CD8-positive, alpha-beta memory T cell (primary cell): ENCODE measurements at regions of chr5 and their contacts with region 1.

Region 1: GRCh38 chr5:177311723-177312648 is at the start of gene MXD3:
- DNase-seq: peak; percentile 92 to 96 (median 94)
- H3K4me3 ChIP-seq: peak within 1 kb of the TSS; percentile 70
- H3K4me3 Mint-ChIP-seq: peak within 1 kb of the TSS; percentile 70 to 92 (median 78)
- H3K27ac ChIP-seq: peak within 1 kb of the TSS; percentile 51
- H3K27ac Mint-ChIP-seq: peak within 1 kb of the TSS; percentile 32 to 84 (median 57)
- H3K4me1 ChIP-seq: peaks cover 20% of the 10 kb centered on the region
- H3K4me1 Mint-ChIP-seq: peaks cover 29 to 43% (median 30%) of the 10 kb centered on the region in 3 donors
- H3K27me3 ChIP-seq: no peaks in the 10 kb centered on the region
- H3K27me3 Mint-ChIP-seq: peaks cover 0 to 2% of the 10 kb centered on the region in 2 donors
- total RNA-seq, gene MXD3: 10.2 to 13.4 TPM

Region 2: GRCh38 chr5:177071666-177072385 is 240.2 kb before region 1 on chr5:
- CTCF ChIA-PET with region 1: no interaction called
- POLR2A ChIA-PET with region 1: no interaction called
- DNase-seq: peak; percentile 31 to 60 (median 52)
- H3K4me3 ChIP-seq: no peak overlapping the region
- H3K4me3 Mint-ChIP-seq: peak overlapping the region in 1 of 7 donors; percentile 11
- H3K27ac ChIP-seq: no peak overlapping the region
- H3K27ac Mint-ChIP-seq: peak overlapping the region in 1 of 8 donors; percentile 62
- H3K4me1 ChIP-seq: no peaks in the 10 kb centered on the region
- H3K4me1 Mint-ChIP-seq: peaks cover 3 to 5% (median 5%) of the 10 kb centered on the region in 3 donors
- H3K27me3 ChIP-seq: no peaks in the 10 kb centered on the region
- H3K27me3 Mint-ChIP-seq: no peaks in the 10 kb centered on the region

Region 3: GRCh38 chr5:177085985-177086923 is 225.7 kb before region 1 on chr5 and contains the start of gene FGFR4:
- CTCF ChIA-PET with region 1: no interaction called
- POLR2A ChIA-PET with region 1: no interaction called
- DNase-seq: peak in 3 of 5 donors; percentile 56 to 73 (median 62)
- H3K4me3 ChIP-seq: peak within 1 kb of the TSS; percentile 49
- H3K4me3 Mint-ChIP-seq: peak within 1 kb of the TSS; percentile 11 to 88 (median 62)
- H3K27ac ChIP-seq: no peak within 1 kb of the TSS
- H3K27ac Mint-ChIP-seq: peak within 1 kb of the TSS in 3 of 8 donors; percentile 18 to 52 (median 35)
- H3K4me1 ChIP-seq: peaks cover 8% of the 10 kb centered on the region
- H3K4me1 Mint-ChIP-seq: peaks cover 9 to 13% (median 11%) of the 10 kb centered on the region in 3 donors
- H3K27me3 ChIP-seq: no peaks in the 10 kb centered on the region
- H3K27me3 Mint-ChIP-seq: peaks cover 3 to 13% of the 10 kb centered on the region in 2 donors
- total RNA-seq, gene FGFR4: 0.42 to 1.2 TPM

Region 4: GRCh38 chr5:177113566-177114424 is 198.2 kb before region 1 on chr5:
- CTCF ChIA-PET with region 1: interaction called, 13 read pairs
- POLR2A ChIA-PET with region 1: no interaction called
- DNase-seq: peak; percentile 65 to 82 (median 70)
- H3K4me3 ChIP-seq: no peak overlapping the region
- H3K4me3 Mint-ChIP-seq: no peak overlapping the region
- H3K27ac ChIP-seq: no peak overlapping the region
- H3K27ac Mint-ChIP-seq: peak overlapping the region in 1 of 8 donors; percentile 1
- H3K4me1 ChIP-seq: peaks cover 16% of the 10 kb centered on the region
- H3K4me1 Mint-ChIP-seq: peaks cover 19 to 24% (median 24%) of the 10 kb centered on the region in 3 donors
- H3K27me3 ChIP-seq: no peaks in the 10 kb centered on the region
- H3K27me3 Mint-ChIP-seq: no peaks in the 10 kb centered on the region

Region 5: DNA sequence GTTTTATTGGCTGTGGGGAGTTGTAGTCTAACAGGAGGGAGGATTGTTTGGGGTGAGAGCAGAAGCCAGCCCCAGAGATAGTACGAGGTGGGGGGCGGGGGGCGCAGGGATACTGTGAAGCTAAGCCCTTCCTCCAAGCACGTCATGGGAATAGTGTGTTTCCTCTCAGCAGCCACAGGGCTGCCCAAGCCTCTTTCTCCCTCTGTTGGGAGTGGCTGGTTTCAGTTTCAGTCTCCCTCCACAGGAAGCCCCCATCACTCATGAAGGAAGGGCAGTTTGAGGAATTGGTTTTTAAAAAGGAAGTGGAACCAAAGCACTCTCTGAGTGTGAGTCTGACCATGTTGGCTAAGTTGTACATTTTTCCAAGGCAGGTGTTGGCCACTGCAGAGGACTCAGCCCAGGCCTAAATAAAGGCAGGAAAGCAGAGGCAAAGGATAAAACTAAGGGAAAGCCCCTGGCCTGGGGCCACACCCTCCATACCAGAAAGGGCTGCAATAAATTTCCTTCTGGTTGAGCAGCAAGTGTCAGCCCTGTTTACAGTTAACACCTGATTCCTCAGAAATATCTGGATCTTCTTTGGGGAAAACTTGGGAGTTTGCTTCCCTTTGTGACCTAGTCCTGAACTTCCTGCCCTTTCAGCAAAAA is 11.6 kb before region 1 on chr5:
- CTCF ChIA-PET with region 1: interaction called, 28 read pairs
- POLR2A ChIA-PET with region 1: interaction called, 5 read pairs
- DNase-seq: peak; percentile 53 to 81 (median 65)
- H3K4me3 ChIP-seq: peak overlapping the region; percentile 30
- H3K4me3 Mint-ChIP-seq: peak overlapping the region; percentile 57 to 96 (median 79)
- H3K27ac ChIP-seq: peak overlapping the region; percentile 46
- H3K27ac Mint-ChIP-seq: peak overlapping the region; percentile 89 to 99 (median 98)
- H3K4me1 ChIP-seq: peaks cover 76% of the 10 kb centered on the region
- H3K4me1 Mint-ChIP-seq: peaks cover 69 to 87% (median 79%) of the 10 kb centered on the region in 3 donors
- H3K27me3 ChIP-seq: no peaks in the 10 kb centered on the region
- H3K27me3 Mint-ChIP-seq: peaks cover 0 to 3% of the 10 kb centered on the region in 2 donors

Region 6: GRCh38 chr5:177336112-177336511 is 24.1 kb after region 1 on chr5:
- CTCF ChIA-PET with region 1: no interaction called
- POLR2A ChIA-PET with region 1: no interaction called
- DNase-seq: no peak
- H3K4me3 ChIP-seq: no peak overlapping the region
- H3K4me3 Mint-ChIP-seq: no peak overlapping the region
- H3K27ac ChIP-seq: no peak overlapping the region
- H3K27ac Mint-ChIP-seq: peak overlapping the region in 1 of 8 donors; percentile 61
- H3K4me1 ChIP-seq: peaks cover 12% of the 10 kb centered on the region
- H3K4me1 Mint-ChIP-seq: peaks cover 17 to 25% (median 22%) of the 10 kb centered on the region in 3 donors
- H3K27me3 ChIP-seq: no peaks in the 10 kb centered on the region
- H3K27me3 Mint-ChIP-seq: no peaks in the 10 kb centered on the region

Region 7: DNA sequence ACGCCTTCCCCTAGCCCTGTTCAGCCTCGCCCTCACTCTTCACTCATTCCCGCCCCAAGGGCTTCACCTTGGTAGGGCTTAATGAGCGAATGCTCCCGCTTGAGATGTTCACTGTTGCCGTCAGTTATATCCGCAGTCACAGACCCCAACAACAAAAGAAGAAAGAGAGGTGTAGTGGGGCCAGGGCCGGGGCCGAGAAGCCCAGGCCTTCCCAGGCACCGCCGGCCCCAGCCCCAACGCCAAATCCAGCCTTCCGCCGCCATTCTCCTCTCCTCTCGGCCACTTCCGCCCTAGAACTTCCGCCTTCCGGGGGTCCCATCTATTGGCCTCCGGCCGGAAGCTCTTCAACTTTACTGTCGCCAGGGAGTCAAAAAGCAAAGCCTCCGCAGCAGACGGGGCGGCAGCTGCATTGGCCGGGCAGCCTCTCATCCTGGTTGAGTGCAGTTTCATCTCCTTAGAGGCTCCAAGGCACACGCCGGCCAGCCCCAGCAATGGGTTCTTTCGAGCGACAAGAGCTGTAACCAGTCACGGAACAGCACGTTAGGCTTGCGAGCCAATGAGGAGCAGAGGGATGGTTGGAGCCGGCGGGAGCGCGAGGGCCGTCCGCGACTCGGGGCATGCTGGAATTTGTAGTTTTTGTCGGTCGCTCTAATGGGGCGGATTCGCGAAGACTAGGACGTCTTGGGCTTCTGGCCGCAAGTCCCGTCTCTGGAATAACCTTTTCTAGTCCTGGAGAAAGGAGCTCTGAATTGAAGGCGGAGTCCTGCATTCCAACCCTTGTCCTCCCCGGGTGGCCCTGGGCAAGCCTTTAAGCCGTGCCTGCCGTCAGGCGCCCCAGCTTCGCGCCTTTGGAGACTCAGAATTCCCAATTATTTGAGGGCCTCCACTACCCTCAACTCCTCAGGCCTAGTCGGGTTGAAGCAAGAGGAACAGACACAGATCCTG is 39.7 kb after region 1 on chr5 and contains the start of gene LMAN2:
- CTCF ChIA-PET with region 1: interaction called, 13 read pairs
- POLR2A ChIA-PET with region 1: interaction called, 3 read pairs
- DNase-seq: peak; percentile 85 to 94 (median 91)
- H3K4me3 ChIP-seq: peak within 1 kb of the TSS; percentile 93
- H3K4me3 Mint-ChIP-seq: peak within 1 kb of the TSS; percentile 97 to 100 (median 98)
- H3K27ac ChIP-seq: peak within 1 kb of the TSS; percentile 96
- H3K27ac Mint-ChIP-seq: peak within 1 kb of the TSS; percentile 94 to 100 (median 100)
- H3K4me1 ChIP-seq: peaks cover 57% of the 10 kb centered on the region
- H3K4me1 Mint-ChIP-seq: peaks cover 61 to 76% (median 72%) of the 10 kb centered on the region in 3 donors
- H3K27me3 ChIP-seq: no peaks in the 10 kb centered on the region
- H3K27me3 Mint-ChIP-seq: no peaks in the 10 kb centered on the region
- total RNA-seq, gene LMAN2: 112 to 126 TPM

Region 8: GRCh38 chr5:177357459-177358351 is 45.7 kb after region 1 on chr5 and contains the start of gene RGS14:
- CTCF ChIA-PET with region 1: interaction called, 13 read pairs
- POLR2A ChIA-PET with region 1: no interaction called
- DNase-seq: peak; percentile 42 to 91 (median 84)
- H3K4me3 ChIP-seq: peak within 1 kb of the TSS; percentile 85
- H3K4me3 Mint-ChIP-seq: peak within 1 kb of the TSS; percentile 84 to 95 (median 87)
- H3K27ac ChIP-seq: peak within 1 kb of the TSS; percentile 79
- H3K27ac Mint-ChIP-seq: peak within 1 kb of the TSS; percentile 75 to 100 (median 95)
- H3K4me1 ChIP-seq: peaks cover 67% of the 10 kb centered on the region
- H3K4me1 Mint-ChIP-seq: peaks cover 71 to 82% (median 79%) of the 10 kb centered on the region in 3 donors
- H3K27me3 ChIP-seq: no peaks in the 10 kb centered on the region
- H3K27me3 Mint-ChIP-seq: no peaks in the 10 kb centered on the region
- total RNA-seq, gene RGS14: 60.5 to 61.9 TPM

Region 9: DNA sequence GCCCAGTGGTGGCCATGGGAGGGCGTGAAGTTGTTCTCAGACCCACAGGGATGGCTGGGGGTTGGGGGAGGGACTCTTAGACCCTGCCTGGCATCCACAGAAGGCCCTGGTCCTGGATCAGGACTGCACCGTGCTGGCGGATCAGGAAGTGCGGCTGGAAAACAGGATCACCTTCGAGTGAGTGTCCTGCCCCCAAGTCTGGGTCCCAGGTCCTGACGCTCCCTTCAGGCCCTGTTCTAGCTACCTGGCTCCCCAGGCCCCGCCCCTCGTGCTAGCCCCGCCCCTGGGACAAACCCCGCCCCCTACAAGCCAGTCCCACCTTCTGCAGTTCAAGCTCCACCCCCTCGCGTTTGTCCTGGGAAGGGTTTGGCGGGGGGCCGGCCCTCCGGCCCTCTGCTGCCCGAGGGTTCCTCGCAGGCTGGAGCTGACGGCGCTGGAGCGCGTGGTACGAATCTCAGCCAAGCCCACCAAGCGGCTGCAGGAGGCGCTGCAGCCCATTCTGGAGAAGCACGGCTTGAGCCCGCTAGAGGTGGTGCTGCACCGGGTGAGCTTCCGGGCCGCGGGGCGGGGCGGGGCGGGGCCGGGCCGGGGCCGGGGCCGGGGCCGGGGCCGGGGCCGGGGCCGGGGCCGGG is 58.6 kb after region 1 on chr5:
- CTCF ChIA-PET with region 1: interaction called, 17 read pairs
- POLR2A ChIA-PET with region 1: interaction called, 3 read pairs
- DNase-seq: peak; percentile 36 to 78 (median 50)
- H3K4me3 ChIP-seq: no peak overlapping the region
- H3K4me3 Mint-ChIP-seq: peak overlapping the region in 2 of 7 donors; percentile 43 to 64
- H3K27ac ChIP-seq: no peak overlapping the region
- H3K27ac Mint-ChIP-seq: peak overlapping the region in 3 of 8 donors; percentile 29 to 81 (median 51)
- H3K4me1 ChIP-seq: peaks cover 66% of the 10 kb centered on the region
- H3K4me1 Mint-ChIP-seq: peaks cover 57 to 77% (median 64%) of the 10 kb centered on the region in 3 donors
- H3K27me3 ChIP-seq: no peaks in the 10 kb centered on the region
- H3K27me3 Mint-ChIP-seq: peaks cover 0 to 1% of the 10 kb centered on the region in 2 donors

Region 10: DNA sequence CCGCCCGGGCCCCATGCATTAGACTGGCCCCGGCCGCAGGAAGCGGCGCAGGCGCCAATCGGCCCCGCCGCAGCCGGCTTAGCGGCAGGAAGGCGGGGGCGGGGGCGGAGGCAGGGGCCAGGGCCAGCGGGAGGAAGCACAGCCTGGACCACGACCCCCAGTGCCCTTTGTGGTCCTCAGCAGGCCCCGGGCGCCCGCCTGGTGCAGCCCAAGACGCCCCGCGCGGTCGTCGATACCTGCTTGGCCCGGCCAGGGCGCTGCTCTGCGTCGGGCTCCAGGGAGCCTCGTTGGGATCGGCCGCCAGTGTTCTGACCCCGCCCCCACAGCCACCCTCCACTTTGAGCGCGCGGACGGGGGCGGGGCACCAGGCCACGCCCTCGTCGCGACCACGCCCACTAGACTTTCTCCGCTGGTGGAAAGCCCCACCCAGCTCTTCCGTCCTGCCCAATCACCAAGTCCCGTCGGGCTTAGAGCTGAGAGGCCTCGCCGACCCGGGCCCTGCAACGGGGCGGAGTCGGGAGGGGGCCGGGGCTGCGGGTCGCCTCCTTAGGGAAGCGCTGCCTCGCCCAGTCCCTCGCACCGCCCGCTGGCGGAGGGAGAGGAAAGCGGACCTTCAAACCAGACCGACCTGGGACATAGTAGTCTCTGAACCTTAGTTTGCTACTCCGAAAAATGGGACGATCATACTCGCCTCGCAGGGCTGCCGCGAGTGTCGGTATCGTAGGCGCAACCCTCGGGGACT is 185.5 kb after region 1 on chr5 and contains the start of gene PDLIM7:
- CTCF ChIA-PET with region 1: interaction called, 20 read pairs
- POLR2A ChIA-PET with region 1: no interaction called
- DNase-seq: peak; percentile 89 to 95 (median 90)
- H3K4me3 ChIP-seq: peak within 1 kb of the TSS; percentile 81
- H3K4me3 Mint-ChIP-seq: peak within 1 kb of the TSS; percentile 69 to 89 (median 86)
- H3K27ac ChIP-seq: peak within 1 kb of the TSS; percentile 69
- H3K27ac Mint-ChIP-seq: peak within 1 kb of the TSS in 7 of 8 donors; percentile 0 to 91 (median 75)
- H3K4me1 ChIP-seq: peaks cover 22% of the 10 kb centered on the region
- H3K4me1 Mint-ChIP-seq: peaks cover 13 to 42% (median 23%) of the 10 kb centered on the region in 3 donors
- H3K27me3 ChIP-seq: no peaks in the 10 kb centered on the region
- H3K27me3 Mint-ChIP-seq: peaks cover 0 to 2% of the 10 kb centered on the region in 2 donors
- total RNA-seq, gene PDLIM7: 28.4 to 30.4 TPM